Mammary epithelial cell (primary cell): ENCODE measurements at regions of chr2 and their contacts with region 1.

Region 1: DNA sequence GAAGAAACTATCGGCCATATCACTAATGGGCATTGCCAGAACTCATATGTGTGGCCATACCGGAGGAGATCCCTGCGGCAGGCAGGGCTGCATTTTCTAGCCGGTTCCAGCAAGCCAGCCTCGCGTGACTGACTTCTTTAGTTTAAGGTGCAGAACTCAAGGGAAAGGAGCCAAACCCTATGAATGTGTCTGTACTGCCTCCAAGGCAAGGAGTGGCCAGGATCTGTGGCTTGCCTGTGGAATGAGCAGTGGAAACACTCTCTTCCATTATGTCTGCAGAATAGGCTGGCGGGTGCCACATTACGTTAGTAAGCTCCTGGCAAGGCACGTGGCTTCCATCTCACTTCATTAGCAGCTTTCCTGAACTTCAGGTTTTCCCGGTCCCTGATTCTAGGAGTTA is 137.6 kb downstream of the ATL2 start:
- DNase-seq: peak; percentile 78
- H3K4me3 ChIP-seq: no peak overlapping the region
- H3K27ac ChIP-seq: peak overlapping the region; percentile 15
- H3K4me1 ChIP-seq: peaks cover 10% of the 10 kb centered on the region
- H3K27me3 ChIP-seq: no peaks in the 10 kb centered on the region
- CTCF ChIP-seq: no peak

Region 2: GRCh38 chr2:37851828-37852584 is 387.5 kb before region 1 on chr2:
- CTCF ChIA-PET with region 1: no interaction called
- dilution Hi-C with region 1: no loop called
- in situ Hi-C with region 1: no loop called
- intact Hi-C with region 1: no loop called
- DNase-seq: no peak
- H3K4me3 ChIP-seq: no peak overlapping the region
- H3K27ac ChIP-seq: no peak overlapping the region
- H3K4me1 ChIP-seq: peaks cover 7% of the 10 kb centered on the region
- H3K27me3 ChIP-seq: no peaks in the 10 kb centered on the region
- CTCF ChIP-seq: no peak

Region 3: DNA sequence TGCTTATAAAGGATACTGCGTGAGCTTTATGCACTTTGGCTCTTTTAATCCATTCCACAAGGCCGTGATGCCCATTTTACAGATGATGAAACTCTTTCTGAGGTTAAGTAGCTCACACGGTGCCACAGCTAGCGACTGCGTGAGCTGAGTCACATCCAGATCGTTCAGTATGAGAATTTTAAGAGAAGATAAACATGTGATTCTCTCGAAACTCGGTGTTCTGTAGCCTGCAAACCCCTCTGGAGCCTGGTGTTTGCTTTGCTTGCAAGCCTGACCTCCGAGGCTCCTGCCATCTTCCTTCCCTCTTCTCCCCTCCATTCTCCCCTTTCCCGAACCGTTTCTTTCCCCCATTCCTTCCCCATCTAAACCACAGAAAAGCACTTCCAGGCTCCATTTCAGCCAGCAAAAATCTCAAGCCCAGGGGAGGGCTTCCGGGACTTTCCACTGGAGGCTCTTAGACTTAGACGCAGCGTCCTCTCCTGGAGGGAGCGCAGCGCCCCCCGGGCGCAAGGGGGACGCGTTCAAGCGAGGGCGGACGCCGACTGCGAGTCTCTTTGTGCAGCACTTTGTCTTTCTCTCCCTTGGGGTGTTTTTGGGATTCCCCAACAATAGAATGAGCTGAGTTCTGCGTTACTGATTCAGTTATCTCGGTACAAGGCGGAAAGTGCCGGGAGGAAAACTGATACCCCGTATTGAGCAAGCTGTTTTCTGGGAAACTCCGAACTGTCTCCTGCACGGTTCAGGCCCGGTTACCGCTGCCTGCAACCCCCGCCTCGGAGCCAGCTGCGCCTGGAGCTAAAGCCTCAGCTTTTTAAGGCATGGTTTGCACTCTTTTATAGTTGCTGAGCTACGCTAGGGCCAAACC is 201.5 kb before region 1 on chr2:
- CTCF ChIA-PET with region 1: no interaction called
- dilution Hi-C with region 1: no loop called
- in situ Hi-C with region 1: no loop called
- intact Hi-C with region 1: no loop called
- DNase-seq: peak; percentile 41
- H3K4me3 ChIP-seq: peak overlapping the region in 1 of 3 experiments; percentile 17
- H3K27ac ChIP-seq: no peak overlapping the region
- H3K4me1 ChIP-seq: no peaks in the 10 kb centered on the region
- H3K27me3 ChIP-seq: peaks cover 3% of the 10 kb centered on the region
- CTCF ChIP-seq: peak in 1 of 2 donors; percentile 4

Region 4: DNA sequence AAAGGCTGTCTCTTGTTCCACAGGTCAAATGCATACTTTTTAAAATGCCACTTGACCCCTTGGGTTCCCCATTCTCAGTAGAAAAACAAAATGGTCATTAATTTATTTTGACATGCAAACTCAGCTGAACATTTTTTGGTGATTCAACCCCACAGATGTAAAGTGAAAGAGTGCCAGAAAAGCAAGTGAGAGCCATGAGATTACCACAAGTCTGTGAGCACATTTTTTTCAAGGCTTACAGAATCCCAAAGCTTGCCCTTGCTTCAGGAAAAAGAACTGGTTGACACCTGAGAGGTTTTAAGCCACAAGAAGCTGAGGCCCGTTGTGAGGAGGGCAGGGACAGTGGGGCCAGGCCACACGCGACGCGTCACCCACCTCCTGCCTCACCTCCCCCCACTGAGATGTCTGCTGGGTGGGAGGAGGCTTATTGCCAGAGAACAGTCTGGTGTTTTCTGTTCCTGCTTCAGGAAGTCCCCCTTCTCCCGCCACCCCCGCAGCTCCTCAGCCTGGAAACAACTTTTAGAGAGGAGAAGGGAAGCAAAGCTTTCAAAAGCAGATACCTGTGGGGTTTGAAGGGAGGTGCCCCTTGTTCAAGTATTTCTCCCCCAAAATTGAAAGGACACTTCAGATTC is 93.1 kb before region 1 on chr2:
- CTCF ChIA-PET with region 1: no interaction called
- dilution Hi-C with region 1: no loop called
- in situ Hi-C with region 1: no loop called
- intact Hi-C with region 1: loop called (anchors 2 kb)
- DNase-seq: peak; percentile 90
- H3K4me3 ChIP-seq: peak overlapping the region in 1 of 3 experiments; percentile 30
- H3K27ac ChIP-seq: peak overlapping the region; percentile 98
- H3K4me1 ChIP-seq: peaks cover 40% of the 10 kb centered on the region
- H3K27me3 ChIP-seq: no peaks in the 10 kb centered on the region
- CTCF ChIP-seq: no peak